H1 (cell line): ENCODE measurements at regions of chr16 and their contacts with region 1.

Region 1: DNA sequence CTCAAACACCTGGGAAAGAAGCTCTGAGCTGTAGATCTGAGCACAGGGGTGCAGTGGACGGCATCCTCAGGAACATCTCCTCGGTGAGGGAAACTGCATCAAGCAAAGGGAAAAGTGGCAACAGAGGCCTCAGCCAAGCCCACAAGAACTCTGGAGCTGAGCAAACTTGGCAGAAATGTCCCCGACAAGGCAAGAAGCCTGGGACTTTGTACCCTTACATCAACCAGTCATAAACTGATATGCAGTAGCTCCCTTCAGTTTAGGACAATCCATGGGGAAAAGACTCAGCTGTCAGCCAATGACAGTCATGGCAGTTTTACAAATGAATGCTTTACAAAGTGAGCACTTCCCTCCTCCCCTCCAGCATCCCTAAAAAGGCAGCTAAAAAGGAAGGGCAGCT is 210.0 kb upstream of the DYNLRB2 start:
- DNase-seq: no peak
- H3K4me3 ChIP-seq: no peak overlapping the region
- H3K27ac ChIP-seq: no peak overlapping the region
- H3K4me1 ChIP-seq: no peaks in the 10 kb centered on the region
- H3K27me3 ChIP-seq: no peaks in the 10 kb centered on the region
- CTCF ChIP-seq: no peak
- EP300 ChIP-seq: no peak
- POLR2A ChIP-seq: no peak
- RAD21 ChIP-seq: no peak

Region 2: DNA sequence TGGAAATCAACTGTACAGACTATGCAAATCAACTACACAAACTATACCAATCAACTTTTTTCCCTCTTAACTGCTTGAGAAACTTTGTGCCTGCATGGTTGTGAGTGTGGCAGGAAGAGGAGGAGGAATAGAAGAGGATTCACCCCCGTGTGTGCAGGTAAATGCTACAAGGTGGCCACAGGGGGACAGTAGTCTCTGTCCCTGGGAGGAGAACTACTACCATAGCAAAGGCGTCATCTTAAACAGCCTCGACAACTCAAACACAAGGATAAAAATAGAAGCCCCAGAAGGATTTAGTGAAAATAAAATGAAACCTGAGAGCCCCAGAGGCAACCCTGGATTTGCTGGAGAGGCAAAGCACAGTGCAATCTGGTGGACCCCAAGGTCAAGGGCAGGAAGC is 10.5 kb after region 1 on chr16:
- CTCF ChIA-PET with region 1: interaction called, 14 read pairs
- POLR2A ChIA-PET with region 1: no interaction called
- DNase-seq: peak in 1 of 2 experiments; percentile 35
- H3K4me3 ChIP-seq: no peak overlapping the region
- H3K27ac ChIP-seq: no peak overlapping the region
- H3K4me1 ChIP-seq: peaks cover 0 to 4% (median 0%) of the 10 kb centered on the region in 4 experiments; a peak in 1 of 7 replicates
- H3K27me3 ChIP-seq: peaks cover 0 to 2% (median 0%) of the 10 kb centered on the region in 4 experiments; a peak in 1 of 7 replicates
- CTCF ChIP-seq: peak; percentile 46 to 65 (median 58)
- EP300 ChIP-seq: no peak
- POLR2A ChIP-seq: no peak
- RAD21 ChIP-seq: peak; percentile 55 to 59